ENCODE measurements at regions of chr11 and their contacts with region 1.

Region 1: DNA sequence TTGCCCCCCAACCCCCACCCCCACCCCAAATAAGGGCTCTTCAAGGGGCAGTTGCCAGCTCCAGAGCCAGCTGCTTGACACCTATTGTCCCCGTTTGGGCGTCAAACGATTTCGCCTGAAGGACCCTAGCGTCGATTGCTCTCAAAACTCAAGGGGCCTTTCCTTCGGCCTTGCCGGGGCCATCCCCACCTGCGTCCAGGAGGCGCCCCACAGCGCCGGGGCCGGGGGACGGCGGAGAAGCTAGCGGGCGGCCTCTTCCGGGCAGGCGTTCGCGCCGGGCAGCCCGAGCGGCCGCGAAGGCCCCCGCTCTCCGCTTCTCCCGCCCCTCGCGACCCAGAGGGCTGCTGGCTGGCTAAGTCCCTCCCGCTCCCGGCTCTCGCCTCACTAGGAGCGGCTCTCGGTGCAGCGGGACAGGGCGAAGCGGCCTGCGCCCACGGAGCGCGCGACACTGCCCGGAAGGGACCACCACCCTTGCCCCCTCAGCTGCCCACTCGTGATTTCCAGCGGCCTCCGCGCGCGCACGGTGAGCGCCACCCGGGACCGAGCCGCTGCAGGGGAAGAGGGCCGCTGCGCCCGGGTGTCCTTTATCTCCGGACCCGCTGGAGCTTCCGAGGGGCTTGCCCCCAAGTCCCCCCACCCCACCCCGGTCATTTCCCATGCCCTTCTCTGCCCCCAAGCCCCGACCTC is at the start of gene CAPRIN1:
- DNase-seq: peak; percentile 78 to 92 (median 89)
- ATAC-seq: peak; percentile 87
- H3K4me3 ChIP-seq: peak within 1 kb of the TSS; percentile 95
- H3K4me3 Mint-ChIP-seq: peak within 1 kb of the TSS; percentile 94 to 99 (median 98)
- H3K27ac ChIP-seq: peak within 1 kb of the TSS; percentile 99
- H3K27ac Mint-ChIP-seq: peak within 1 kb of the TSS; percentile 94 to 99 (median 97)
- H3K4me1 ChIP-seq: peaks cover 21 to 27% of the 10 kb centered on the region in 2 donors
- H3K4me1 Mint-ChIP-seq: peaks cover 3 to 42% (median 30%) of the 10 kb centered on the region in 7 donors
- H3K27me3 ChIP-seq: no peaks in the 10 kb centered on the region
- H3K27me3 Mint-ChIP-seq: peaks cover 0 to 6% (median 0%) of the 10 kb centered on the region in 5 donors
- total RNA-seq, gene CAPRIN1: 120 to 227 (median 163) TPM

Region 2: DNA sequence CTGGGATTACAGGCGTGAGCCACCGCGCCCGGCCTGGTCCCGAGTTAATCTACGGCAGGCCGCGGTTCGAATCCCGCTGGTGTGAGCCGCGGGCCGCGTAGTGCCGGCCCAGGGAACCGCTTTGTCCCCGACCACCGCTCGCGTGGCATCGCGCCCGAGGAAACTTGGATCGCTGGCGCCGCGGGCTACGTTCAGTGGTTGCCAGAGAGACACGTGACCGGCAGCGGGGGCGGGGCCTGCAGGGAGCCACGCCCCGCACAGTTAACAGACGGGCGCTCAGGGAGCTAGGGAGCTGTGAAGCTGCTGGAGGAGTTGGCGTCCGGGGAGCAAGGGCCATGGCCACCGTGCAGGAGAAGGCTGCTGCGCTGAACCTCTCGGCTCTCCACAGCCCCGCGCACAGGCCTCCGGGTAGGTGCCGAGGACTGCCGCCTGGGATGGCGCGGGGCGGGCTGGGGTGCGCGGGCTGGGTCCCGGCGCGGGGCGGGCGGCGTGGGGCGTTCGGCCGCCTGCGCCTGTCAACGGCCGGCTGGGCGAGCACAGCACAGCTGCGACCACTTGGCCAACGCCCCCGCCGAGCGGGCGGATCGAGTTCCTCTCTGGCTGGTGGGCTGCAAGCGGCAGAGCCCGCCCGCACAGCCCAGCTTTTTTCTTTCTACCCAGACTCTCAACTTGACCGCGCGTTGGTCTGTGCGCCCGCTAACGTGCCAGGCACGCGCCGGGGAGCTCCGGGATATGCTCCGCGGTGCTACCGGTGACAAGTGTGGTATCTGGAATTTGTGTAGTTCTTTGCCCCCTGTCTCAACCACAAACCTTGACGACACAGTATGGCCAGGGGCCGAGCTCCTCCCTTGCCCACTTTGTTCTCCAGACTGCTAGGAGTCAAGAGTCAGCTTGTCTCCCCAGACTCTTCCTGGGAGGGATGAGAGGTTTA is 1035.6 kb before region 1 on chr11 and contains the start of gene DEPDC7:
- CTCF ChIA-PET with region 1: no interaction called
- POLR2A ChIA-PET with region 1: no interaction called
- intact Hi-C with region 1: loop called in 1 of 2 experiments (anchors 10 kb)
- DNase-seq: peak; percentile 72 to 84 (median 81)
- ATAC-seq: peak; percentile 90
- H3K4me3 ChIP-seq: peak within 1 kb of the TSS; percentile 65
- H3K4me3 Mint-ChIP-seq: peak within 1 kb of the TSS; percentile 86 to 93 (median 90)
- H3K27ac ChIP-seq: peak within 1 kb of the TSS; percentile 50
- H3K27ac Mint-ChIP-seq: peak within 1 kb of the TSS in 6 of 9 donors; percentile 63 to 77 (median 69)
- H3K4me1 ChIP-seq: peaks cover 14 to 23% of the 10 kb centered on the region in 2 donors
- H3K4me1 Mint-ChIP-seq: peaks cover 14 to 73% (median 58%) of the 10 kb centered on the region in 7 donors
- H3K27me3 ChIP-seq: peaks cover 0 to 7% of the 10 kb centered on the region in 2 donors
- H3K27me3 Mint-ChIP-seq: peaks cover 0 to 74% (median 5%) of the 10 kb centered on the region in 5 donors
- total RNA-seq, gene DEPDC7: 0.65 to 9.6 (median 2.1) TPM

Region 3: DNA sequence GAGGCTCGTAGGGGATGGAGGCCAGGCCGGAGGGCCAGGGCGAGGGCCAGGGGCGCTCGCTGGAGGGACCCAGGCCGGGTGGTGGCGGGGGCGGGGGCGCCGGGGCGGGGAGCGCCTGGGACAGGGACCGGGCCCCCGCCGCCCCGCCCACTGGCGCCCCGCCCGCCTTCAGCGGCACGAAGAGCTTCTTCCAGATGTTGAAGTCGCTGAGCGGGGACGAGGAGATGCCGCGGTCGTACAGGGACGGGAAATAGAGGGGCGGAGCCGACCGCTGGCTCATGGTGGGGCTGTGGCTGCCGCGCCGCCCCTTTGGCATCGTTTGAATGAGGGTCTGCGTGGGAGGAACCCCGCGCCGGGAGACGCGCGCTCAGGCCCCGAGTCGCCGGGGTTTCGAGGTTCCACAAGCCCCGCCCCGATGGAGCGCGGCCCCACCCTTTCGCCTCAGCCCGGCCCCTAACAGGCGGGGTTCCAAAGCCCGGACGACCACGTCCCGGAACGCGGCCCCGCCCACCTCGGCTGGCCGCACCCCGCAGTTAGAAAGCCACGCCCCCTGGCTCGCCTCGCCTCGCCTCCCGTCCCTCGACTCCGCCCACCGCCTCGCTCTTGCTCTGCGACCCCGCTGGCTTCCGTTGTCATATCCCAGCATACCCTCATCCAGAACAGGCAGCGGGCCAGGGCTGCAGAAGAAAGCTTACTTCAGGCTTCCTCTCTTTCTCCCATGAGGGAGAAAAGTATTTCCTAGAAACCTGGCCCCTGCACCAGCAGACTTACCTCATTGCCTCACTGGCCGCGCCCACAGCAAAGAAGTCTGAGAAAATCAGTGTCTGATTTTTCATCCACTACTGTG is 350.8 kb before region 1 on chr11 and contains the start of gene C11orf91:
- CTCF ChIA-PET with region 1: no interaction called
- POLR2A ChIA-PET with region 1: no interaction called
- intact Hi-C with region 1: loop called in 1 of 2 experiments (anchors 2 kb)
- DNase-seq: peak; percentile 88 to 98 (median 95)
- ATAC-seq: peak; percentile 99
- H3K4me3 ChIP-seq: peak within 1 kb of the TSS; percentile 54
- H3K4me3 Mint-ChIP-seq: peak within 1 kb of the TSS; percentile 84 to 96 (median 92)
- H3K27ac ChIP-seq: no peak within 1 kb of the TSS
- H3K27ac Mint-ChIP-seq: peak within 1 kb of the TSS; percentile 61 to 84 (median 76)
- H3K4me1 ChIP-seq: peaks cover 9 to 13% of the 10 kb centered on the region in 2 donors
- H3K4me1 Mint-ChIP-seq: peaks cover 14 to 27% (median 23%) of the 10 kb centered on the region in 7 donors
- H3K27me3 ChIP-seq: no peaks in the 10 kb centered on the region
- H3K27me3 Mint-ChIP-seq: peaks cover 0 to 31% (median 5%) of the 10 kb centered on the region in 5 donors
- total RNA-seq, gene C11orf91: not detected

Region 4: GRCh38 chr11:33869481-33870422 is 181.7 kb before region 1 on chr11:
- CTCF ChIA-PET with region 1: no interaction called
- POLR2A ChIA-PET with region 1: no interaction called
- intact Hi-C with region 1: loop called in 1 of 2 experiments (anchors 10 kb)
- DNase-seq: peak in 2 of 9 donors; percentile 20 to 34
- ATAC-seq: peak; percentile 77
- H3K4me3 ChIP-seq: peak overlapping the region; percentile 47
- H3K4me3 Mint-ChIP-seq: peak overlapping the region; percentile 85 to 97 (median 92)
- H3K27ac ChIP-seq: no peak overlapping the region
- H3K27ac Mint-ChIP-seq: peak overlapping the region in 1 of 9 donors; percentile 67
- H3K4me1 ChIP-seq: peaks cover 0 to 7% of the 10 kb centered on the region in 2 donors
- H3K4me1 Mint-ChIP-seq: peaks cover 0 to 25% (median 12%) of the 10 kb centered on the region in 7 donors
- H3K27me3 ChIP-seq: peaks cover 0 to 18% of the 10 kb centered on the region in 2 donors
- H3K27me3 Mint-ChIP-seq: peaks cover 47 to 77% (median 71%) of the 10 kb centered on the region in 5 donors

Region 5: DNA sequence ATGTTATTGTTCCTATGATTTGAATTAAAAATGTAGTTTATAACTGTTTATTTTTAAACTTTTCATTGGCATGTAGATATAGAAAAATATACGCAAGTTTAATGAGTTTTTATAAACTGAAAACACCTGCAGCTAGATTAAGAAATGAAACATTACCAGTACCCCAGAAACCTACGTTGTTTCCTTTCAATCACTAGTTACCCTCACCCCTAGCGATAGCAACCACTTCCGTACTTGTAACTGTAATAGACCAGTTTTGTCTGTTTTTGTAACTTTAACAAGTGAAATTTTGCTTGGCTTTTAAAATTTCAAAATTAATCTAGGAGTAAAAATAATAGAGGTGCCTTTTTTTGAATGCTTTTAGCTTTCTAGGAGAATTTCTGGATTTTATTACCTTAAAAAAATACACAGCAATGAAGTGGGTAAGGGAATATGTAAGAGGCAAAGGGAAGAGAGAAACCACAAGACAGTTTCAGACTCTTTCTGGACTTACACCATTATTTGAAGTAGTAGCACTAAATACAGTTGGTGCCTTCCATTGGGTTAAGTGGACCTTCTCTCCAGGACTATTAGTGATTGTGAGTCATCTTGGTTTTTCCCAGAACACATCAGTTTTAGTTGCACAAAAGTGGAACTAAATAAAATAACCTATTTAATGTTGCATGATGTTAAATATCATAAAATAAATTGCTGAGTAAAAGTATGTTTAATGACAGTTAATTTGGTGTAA is 35.2 kb after region 1 on chr11:
- CTCF ChIA-PET with region 1: interaction called, 3 read pairs
- POLR2A ChIA-PET with region 1: interaction called, 4 read pairs
- intact Hi-C with region 1: loop called (anchors 5 kb)
- DNase-seq: peak in 2 of 9 donors; percentile 18 to 31
- ATAC-seq: peak; percentile 65
- H3K4me3 ChIP-seq: no peak overlapping the region
- H3K4me3 Mint-ChIP-seq: peak overlapping the region in 6 of 10 donors; percentile 5 to 35 (median 28)
- H3K27ac ChIP-seq: peak overlapping the region; percentile 31
- H3K27ac Mint-ChIP-seq: peak overlapping the region; percentile 32 to 91 (median 76)
- H3K4me1 ChIP-seq: peaks cover 0 to 3% of the 10 kb centered on the region in 2 donors
- H3K4me1 Mint-ChIP-seq: peaks cover 3 to 30% (median 18%) of the 10 kb centered on the region in 7 donors
- H3K27me3 ChIP-seq: no peaks in the 10 kb centered on the region
- H3K27me3 Mint-ChIP-seq: no peaks in the 10 kb centered on the region

Region 6: DNA sequence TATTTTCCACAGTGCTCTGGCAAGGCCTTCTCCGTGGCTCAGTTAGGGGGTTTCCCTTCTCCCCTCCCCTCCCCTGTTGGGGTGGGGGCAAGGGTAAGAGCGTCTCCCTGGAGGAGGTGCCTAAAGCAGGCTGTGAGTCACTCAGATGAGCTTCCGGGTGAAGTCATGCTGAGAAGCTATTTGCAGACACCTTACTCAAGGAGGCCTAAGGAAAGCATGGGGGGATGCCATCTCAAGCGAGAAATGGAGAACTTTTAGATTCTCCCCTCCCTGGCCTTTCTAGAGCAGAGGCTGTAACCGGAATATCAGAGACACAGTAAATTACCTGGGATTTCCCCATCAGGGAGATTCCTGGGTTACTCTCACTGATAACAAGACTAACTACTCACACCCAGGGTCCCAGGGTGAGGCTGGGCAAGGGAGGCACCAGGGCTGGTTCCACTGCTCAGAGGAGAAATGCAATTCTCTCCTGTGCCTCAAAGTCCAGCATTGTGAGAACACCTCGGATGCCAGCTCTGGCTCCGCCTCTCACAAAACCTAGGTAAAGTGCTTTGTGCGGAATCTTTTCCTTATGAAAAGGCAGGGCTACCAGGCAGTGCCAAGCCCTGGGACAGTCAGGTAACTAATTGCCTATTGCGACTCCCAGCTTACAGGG is 182.7 kb after region 1 on chr11:
- CTCF ChIA-PET with region 1: no interaction called
- POLR2A ChIA-PET with region 1: no interaction called
- intact Hi-C with region 1: loop called in 1 of 2 experiments (anchors 5 kb)
- DNase-seq: peak in 8 of 9 donors; percentile 50 to 89 (median 62)
- ATAC-seq: no peak
- H3K4me3 ChIP-seq: peak overlapping the region; percentile 16
- H3K4me3 Mint-ChIP-seq: peak overlapping the region in 5 of 10 donors; percentile 35 to 69 (median 47)
- H3K27ac ChIP-seq: peak overlapping the region; percentile 39
- H3K27ac Mint-ChIP-seq: peak overlapping the region in 7 of 9 donors; percentile 12 to 74 (median 65)
- H3K4me1 ChIP-seq: peaks cover 8 to 18% of the 10 kb centered on the region in 2 donors
- H3K4me1 Mint-ChIP-seq: peaks cover 0 to 34% (median 13%) of the 10 kb centered on the region in 7 donors
- H3K27me3 ChIP-seq: no peaks in the 10 kb centered on the region
- H3K27me3 Mint-ChIP-seq: peaks cover 0 to 7% (median 0%) of the 10 kb centered on the region in 5 donors

Region 7: GRCh38 chr11:35337136-35337918 is 1285.8 kb after region 1 on chr11:
- CTCF ChIA-PET with region 1: no interaction called
- POLR2A ChIA-PET with region 1: interaction called, 3 read pairs
- intact Hi-C with region 1: loop called in 1 of 2 experiments (anchors 10 kb)
- DNase-seq: no peak
- ATAC-seq: peak; percentile 70
- H3K4me3 ChIP-seq: no peak overlapping the region
- H3K4me3 Mint-ChIP-seq: no peak overlapping the region
- H3K27ac ChIP-seq: no peak overlapping the region
- H3K27ac Mint-ChIP-seq: no peak overlapping the region
- H3K4me1 ChIP-seq: peaks cover 6 to 14% of the 10 kb centered on the region in 2 donors
- H3K4me1 Mint-ChIP-seq: peaks cover 12 to 40% (median 28%) of the 10 kb centered on the region in 7 donors
- H3K27me3 ChIP-seq: no peaks in the 10 kb centered on the region
- H3K27me3 Mint-ChIP-seq: no peaks in the 10 kb centered on the region

Measured in naive thymus-derived CD4-positive, alpha-beta T cell (primary cell).